ENCODE measurements at regions of chr1 and their contacts with region 1.

Region 1: GRCh38 chr1:172154551-172154950 is 265.9 kb upstream of the C1orf105 start:
- DNase-seq: no peak
- H3K4me3 Mint-ChIP-seq: no peak overlapping the region
- H3K27ac Mint-ChIP-seq: peak overlapping the region; percentile 86
- H3K4me1 Mint-ChIP-seq: peaks cover 14% of the 10 kb centered on the region
- H3K27me3 Mint-ChIP-seq: no peaks in the 10 kb centered on the region

Region 2: GRCh38 chr1:172135076-172135672 is 19.4 kb before region 1 on chr1:
- CTCF ChIA-PET with region 1: no interaction called
- POLR2A ChIA-PET with region 1: no interaction called
- intact Hi-C with region 1: loop called (anchors 2 kb)
- DNase-seq: no peak
- H3K4me3 Mint-ChIP-seq: no peak overlapping the region
- H3K27ac Mint-ChIP-seq: peak overlapping the region; percentile 29
- H3K4me1 Mint-ChIP-seq: peaks cover 18% of the 10 kb centered on the region
- H3K27me3 Mint-ChIP-seq: no peaks in the 10 kb centered on the region

Measured in activated CD4-positive, alpha-beta memory T cell treated with anti-CD3 and anti-CD28 coated beads for 36 hours (primary cell).